CD14-positive monocyte (primary cell): ENCODE measurements at regions of chr2 and their contacts with region 1.

Region 1: GRCh38 chr2:240624950-240625621 is at the start of gene GPR35:
- DNase-seq: peak; percentile 97 to 99 (median 98)
- H3K4me3 ChIP-seq: peak within 1 kb of the TSS; percentile 41 to 82 (median 66)
- H3K4me3 Mint-ChIP-seq: peak within 1 kb of the TSS; percentile 77 to 90
- H3K27ac ChIP-seq: peak within 1 kb of the TSS; percentile 96 to 99
- H3K27ac Mint-ChIP-seq: peak within 1 kb of the TSS; percentile 93 to 99 (median 97)
- H3K4me1 ChIP-seq: peaks cover 76 to 81% of the 10 kb centered on the region in 2 donors
- H3K4me1 Mint-ChIP-seq: peaks cover 65% of the 10 kb centered on the region
- H3K27me3 ChIP-seq: no peaks in the 10 kb centered on the region
- H3K27me3 Mint-ChIP-seq: peaks cover 0 to 1% (median 0%) of the 10 kb centered on the region in 3 donors
- CTCF ChIP-seq: peak; percentile 13
- polyA plus RNA-seq, gene GPR35: 30.6 to 37.8 (median 36.3) TPM

Region 2: GRCh38 chr2:240560480-240561326 is 64.4 kb before region 1 on chr2:
- intact Hi-C with region 1: loop called (anchors 2 to 5 kb)
- DNase-seq: peak; percentile 97 to 99 (median 99)
- H3K4me3 ChIP-seq: peak overlapping the region; percentile 66 to 80 (median 79)
- H3K4me3 Mint-ChIP-seq: peak overlapping the region; percentile 84 to 92
- H3K27ac ChIP-seq: peak overlapping the region; percentile 97 to 98
- H3K27ac Mint-ChIP-seq: peak overlapping the region; percentile 93 to 100 (median 97)
- H3K4me1 ChIP-seq: peaks cover 76 to 91% of the 10 kb centered on the region in 2 donors
- H3K4me1 Mint-ChIP-seq: peaks cover 73% of the 10 kb centered on the region
- H3K27me3 ChIP-seq: no peaks in the 10 kb centered on the region
- H3K27me3 Mint-ChIP-seq: peaks cover 0 to 7% (median 6%) of the 10 kb centered on the region in 3 donors
- CTCF ChIP-seq: peak; percentile 30

Region 3: GRCh38 chr2:240579771-240580614 is 45.1 kb before region 1 on chr2:
- intact Hi-C with region 1: loop called (anchors 2 to 5 kb)
- DNase-seq: peak; percentile 92 to 96 (median 95)
- H3K4me3 ChIP-seq: peak overlapping the region in 1 of 3 experiments; percentile 34
- H3K4me3 Mint-ChIP-seq: peak overlapping the region; percentile 31 to 54
- H3K27ac ChIP-seq: peak overlapping the region; percentile 88 to 96
- H3K27ac Mint-ChIP-seq: peak overlapping the region; percentile 94 to 98 (median 97)
- H3K4me1 ChIP-seq: peaks cover 45 to 53% of the 10 kb centered on the region in 2 donors
- H3K4me1 Mint-ChIP-seq: peaks cover 59% of the 10 kb centered on the region
- H3K27me3 ChIP-seq: no peaks in the 10 kb centered on the region
- H3K27me3 Mint-ChIP-seq: peaks cover 0 to 4% (median 2%) of the 10 kb centered on the region in 3 donors
- CTCF ChIP-seq: peak; percentile 50

Region 4: DNA sequence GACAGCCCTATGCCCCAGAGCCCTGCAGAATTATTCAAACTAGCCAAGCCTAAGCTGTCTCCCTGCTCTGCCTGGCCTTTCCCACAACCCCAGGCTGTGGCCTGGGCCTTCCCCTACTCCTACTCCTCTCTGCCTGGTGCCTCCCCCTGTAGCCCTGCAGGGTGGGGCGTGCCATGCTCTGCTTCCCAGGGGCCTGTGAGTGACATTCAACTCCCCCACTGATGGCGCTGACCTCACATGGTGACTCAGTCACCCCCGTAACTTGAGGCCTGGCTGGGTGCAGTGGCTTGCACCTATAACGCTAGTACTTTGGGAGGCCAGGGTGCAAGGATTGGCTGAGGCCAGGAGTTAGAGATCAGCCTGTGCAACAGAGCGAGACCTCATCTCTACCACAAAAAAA is 134.4 kb after region 1 on chr2:
- intact Hi-C with region 1: no loop called
- DNase-seq: no peak
- H3K4me3 ChIP-seq: no peak overlapping the region
- H3K4me3 Mint-ChIP-seq: no peak overlapping the region
- H3K27ac ChIP-seq: no peak overlapping the region
- H3K27ac Mint-ChIP-seq: no peak overlapping the region
- H3K4me1 ChIP-seq: no peaks in the 10 kb centered on the region
- H3K4me1 Mint-ChIP-seq: no peaks in the 10 kb centered on the region
- H3K27me3 ChIP-seq: no peaks in the 10 kb centered on the region
- H3K27me3 Mint-ChIP-seq: peaks cover 2 to 3% (median 2%) of the 10 kb centered on the region in 3 donors
- CTCF ChIP-seq: no peak